ENCODE measurements at regions of chr10 and their contacts with region 1.

Region 1: GRCh38 chr10:73997787-73998622 is at the start of gene VCL:
- DNase-seq: peak; percentile 100
- ATAC-seq: peak; percentile 83
- H3K4me3 ChIP-seq: peak within 1 kb of the TSS; percentile 73
- H3K27ac ChIP-seq: peak within 1 kb of the TSS; percentile 66
- H3K4me1 ChIP-seq: peaks cover 32% of the 10 kb centered on the region
- H3K27me3 ChIP-seq: no peaks in the 10 kb centered on the region
- CTCF ChIP-seq: no peak
- total RNA-seq, gene VCL: 382 and 445 TPM in 2 replicates

Region 2: DNA sequence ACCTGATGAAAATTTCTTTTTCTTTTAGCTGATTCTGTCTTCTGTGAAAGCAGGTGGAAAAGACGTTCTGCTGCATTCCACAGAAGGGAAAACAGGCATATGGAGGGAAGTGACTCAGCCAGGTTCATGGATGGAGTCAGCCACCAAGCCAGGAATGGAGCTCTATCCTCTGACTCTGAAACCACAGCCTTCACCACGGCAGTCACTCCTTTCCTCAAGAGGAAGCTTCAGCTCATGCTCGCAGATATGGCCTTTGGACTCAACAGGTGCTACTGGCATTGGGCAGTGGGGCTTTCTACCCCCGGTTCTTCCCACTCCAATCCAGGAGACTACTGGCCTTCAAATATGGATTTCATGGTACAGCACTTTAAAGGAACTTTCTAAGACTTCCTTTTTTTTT is 98.6 kb before region 1 on chr10:
- CTCF ChIA-PET with region 1: no interaction called
- POLR2A ChIA-PET with region 1: interaction called, 28 read pairs
- intact Hi-C with region 1: no loop called
- DNase-seq: peak; percentile 100
- ATAC-seq: peak; percentile 93
- H3K4me3 ChIP-seq: peak overlapping the region; percentile 8; the same call in 1 of the 2 replicates
- H3K27ac ChIP-seq: peak overlapping the region; percentile 78
- H3K4me1 ChIP-seq: peaks cover 54% of the 10 kb centered on the region
- H3K27me3 ChIP-seq: no peaks in the 10 kb centered on the region
- CTCF ChIP-seq: no peak

Region 3: DNA sequence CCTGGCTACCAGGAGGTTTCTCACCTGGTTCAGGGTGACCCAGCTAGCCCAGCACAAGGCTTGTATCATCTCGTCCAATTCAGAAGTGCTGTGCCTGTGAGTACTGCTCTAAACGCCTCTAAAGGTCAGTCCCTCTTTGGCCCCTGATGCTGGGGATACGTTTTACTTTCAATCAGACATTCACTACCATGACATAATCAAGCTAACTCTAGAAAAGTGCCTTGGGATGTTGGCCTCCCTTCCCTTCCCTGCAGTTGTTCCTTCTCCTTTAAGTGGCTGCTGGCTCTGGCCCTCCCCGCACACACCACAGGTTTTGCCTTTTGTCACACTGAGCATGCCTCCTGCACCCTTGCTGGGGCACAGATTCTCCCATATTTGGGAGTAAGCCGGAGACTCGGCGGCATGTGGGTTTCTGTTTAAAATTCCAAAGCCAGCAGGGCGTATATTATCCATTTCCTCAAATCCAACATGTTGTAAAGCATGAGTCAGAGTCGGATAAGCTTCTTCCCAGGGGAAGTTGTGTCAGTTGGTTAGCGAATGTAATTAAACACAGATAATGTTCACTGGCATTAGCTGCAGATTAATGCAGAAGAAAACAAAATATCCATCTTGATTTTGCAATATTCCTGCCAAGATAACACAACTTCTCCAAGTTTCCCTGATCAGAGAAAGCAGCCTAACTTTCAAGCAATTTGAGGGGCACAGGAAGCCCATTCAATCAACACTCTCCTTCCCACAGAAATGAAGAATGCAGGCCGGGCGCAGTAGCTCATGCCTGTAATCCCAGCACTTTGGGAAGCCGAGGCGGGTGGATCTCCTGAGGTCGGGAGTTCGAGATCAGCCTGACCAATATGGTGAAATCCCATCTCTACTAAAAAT is 31.9 kb before region 1 on chr10:
- CTCF ChIA-PET with region 1: interaction called, 5 read pairs
- POLR2A ChIA-PET with region 1: interaction called, 27 read pairs
- intact Hi-C with region 1: loop called (anchors 1 kb)
- DNase-seq: peak; percentile 100
- ATAC-seq: peak; percentile 98
- H3K4me3 ChIP-seq: peak overlapping the region; percentile 6
- H3K27ac ChIP-seq: peak overlapping the region; percentile 73
- H3K4me1 ChIP-seq: peaks cover 27% of the 10 kb centered on the region
- H3K27me3 ChIP-seq: no peaks in the 10 kb centered on the region
- CTCF ChIP-seq: no peak

Region 4: GRCh38 chr10:74035303-74035702 is 37.3 kb after region 1 on chr10:
- CTCF ChIA-PET with region 1: interaction called, 13 read pairs
- POLR2A ChIA-PET with region 1: interaction called, 12 read pairs
- intact Hi-C with region 1: loop called (anchors 1 kb)
- DNase-seq: peak; percentile 76
- ATAC-seq: peak; percentile 51
- H3K4me3 ChIP-seq: no peak overlapping the region
- H3K27ac ChIP-seq: no peak overlapping the region
- H3K4me1 ChIP-seq: no peaks in the 10 kb centered on the region
- H3K27me3 ChIP-seq: no peaks in the 10 kb centered on the region
- CTCF ChIP-seq: peak; percentile 98

Region 5: DNA sequence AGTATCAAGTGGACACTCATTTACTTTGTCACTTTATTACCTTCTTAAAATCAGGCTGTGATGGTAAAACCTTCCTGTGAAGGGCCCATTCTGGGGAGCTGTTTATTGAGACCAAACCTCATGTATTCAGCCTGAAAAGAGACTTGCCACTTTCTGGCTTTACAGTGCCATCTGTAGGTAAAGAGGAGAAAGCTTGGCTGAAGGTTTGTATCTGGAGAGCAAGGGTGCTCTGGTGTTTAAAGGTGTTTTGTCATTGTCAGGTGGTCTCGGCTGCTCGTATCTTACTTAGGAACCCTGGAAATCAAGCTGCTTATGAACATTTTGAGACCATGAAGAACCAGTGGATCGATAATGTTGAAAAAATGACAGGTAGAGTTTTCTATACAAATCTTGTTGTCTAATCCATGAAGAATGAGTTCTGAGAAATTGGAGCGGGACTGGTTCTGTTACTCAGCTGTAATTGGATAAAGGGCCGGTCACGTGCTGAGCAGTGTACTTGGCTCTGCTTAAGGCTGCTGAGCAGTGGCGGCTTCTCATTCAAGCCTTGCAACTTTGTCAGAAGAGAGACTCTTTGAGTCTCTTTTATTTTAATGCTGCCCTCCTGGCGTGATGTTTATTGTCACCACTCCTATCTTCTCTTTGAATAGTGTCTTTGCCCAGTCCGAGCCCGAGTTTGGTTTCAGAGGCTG is 105.7 kb after region 1 on chr10:
- CTCF ChIA-PET with region 1: interaction called, 6 read pairs
- POLR2A ChIA-PET with region 1: interaction called, 4 read pairs
- intact Hi-C with region 1: loop called (anchors 1 kb)
- DNase-seq: peak; percentile 90
- ATAC-seq: peak; percentile 87
- H3K4me3 ChIP-seq: no peak overlapping the region
- H3K27ac ChIP-seq: no peak overlapping the region
- H3K4me1 ChIP-seq: no peaks in the 10 kb centered on the region
- H3K27me3 ChIP-seq: no peaks in the 10 kb centered on the region
- CTCF ChIP-seq: peak; percentile 100

Measured in PC-3 (cell line).